ENCODE measurements at regions of chr10 and their contacts with region 1.

Region 1: GRCh38 chr10:63922468-63923314 is 401.5 kb downstream of the REEP3 start:
- DNase-seq: no peak
- ATAC-seq: peak; percentile 31
- H3K4me3 ChIP-seq: no peak overlapping the region
- H3K27ac ChIP-seq: no peak overlapping the region
- H3K4me1 ChIP-seq: no peaks in the 10 kb centered on the region
- H3K27me3 ChIP-seq: peaks cover 30% of the 10 kb centered on the region
- CTCF ChIP-seq: no peak

Region 2: DNA sequence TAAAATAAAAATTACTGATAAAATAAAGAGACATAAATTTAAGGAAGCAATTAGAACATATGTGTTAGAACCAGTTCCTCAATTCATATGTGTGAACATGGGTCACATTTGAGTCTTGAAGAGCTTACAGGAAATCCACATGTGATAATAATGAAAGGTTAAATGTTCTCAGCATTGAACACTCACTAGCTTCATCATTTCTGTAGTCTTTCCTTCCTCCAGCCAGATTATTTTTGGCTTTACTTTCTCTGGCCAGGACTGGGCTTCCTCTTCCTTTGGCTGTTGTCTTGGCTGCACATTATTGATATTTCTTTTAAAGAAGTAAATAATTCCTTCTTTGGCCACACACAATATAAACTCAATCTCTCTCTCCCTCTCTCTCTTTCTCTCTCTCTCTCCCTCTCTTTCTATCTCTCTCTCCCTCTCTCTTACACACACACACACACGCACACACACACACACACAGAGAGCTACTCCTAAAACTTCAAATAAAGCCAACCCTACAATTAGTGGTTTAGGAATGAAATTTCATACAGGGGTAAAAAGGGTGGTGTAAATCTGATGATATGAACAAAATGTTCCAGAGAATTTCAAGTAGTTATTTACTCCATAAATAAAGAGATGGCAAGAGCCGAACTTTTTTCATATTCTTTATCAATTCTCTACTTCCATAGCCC is 230.3 kb before region 1 on chr10:
- CTCF ChIA-PET with region 1: no interaction called
- POLR2A ChIA-PET with region 1: no interaction called
- intact Hi-C with region 1: no loop called
- DNase-seq: no peak
- ATAC-seq: no peak
- H3K4me3 ChIP-seq: no peak overlapping the region
- H3K27ac ChIP-seq: no peak overlapping the region
- H3K4me1 ChIP-seq: peaks cover 4% of the 10 kb centered on the region
- H3K27me3 ChIP-seq: no peaks in the 10 kb centered on the region
- CTCF ChIP-seq: no peak

Region 3: DNA sequence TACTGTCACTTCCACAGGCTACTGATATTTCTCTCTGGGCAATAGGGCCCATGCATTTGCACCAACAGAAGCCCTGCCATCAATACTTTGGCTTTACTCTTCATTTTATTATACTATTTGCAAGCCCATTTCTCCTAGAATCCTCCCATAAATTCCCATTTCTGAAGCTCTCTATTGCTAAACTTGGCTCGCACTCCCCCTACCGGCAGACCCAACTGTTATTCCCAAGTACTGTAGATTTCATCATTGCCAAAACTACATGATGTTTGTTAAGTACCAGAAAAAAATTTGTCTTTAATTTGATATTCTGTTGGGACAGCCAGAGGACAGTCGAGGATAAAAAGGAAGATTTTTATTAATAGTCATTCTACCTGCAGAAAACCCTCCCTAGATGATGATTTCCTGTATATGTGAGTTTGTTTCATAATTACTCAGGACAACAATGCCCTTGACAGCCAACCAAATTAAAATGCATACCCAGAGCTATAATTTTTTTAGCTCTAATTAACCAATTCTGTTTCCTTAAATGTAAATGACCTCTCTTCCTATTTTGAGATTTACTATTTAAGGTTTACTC is 102.8 kb before region 1 on chr10:
- CTCF ChIA-PET with region 1: no interaction called
- POLR2A ChIA-PET with region 1: no interaction called
- intact Hi-C with region 1: no loop called
- DNase-seq: peak; percentile 79
- ATAC-seq: peak; percentile 85
- H3K4me3 ChIP-seq: no peak overlapping the region
- H3K27ac ChIP-seq: no peak overlapping the region
- H3K4me1 ChIP-seq: no peaks in the 10 kb centered on the region
- H3K27me3 ChIP-seq: no peaks in the 10 kb centered on the region
- CTCF ChIP-seq: peak; percentile 96

Region 4: DNA sequence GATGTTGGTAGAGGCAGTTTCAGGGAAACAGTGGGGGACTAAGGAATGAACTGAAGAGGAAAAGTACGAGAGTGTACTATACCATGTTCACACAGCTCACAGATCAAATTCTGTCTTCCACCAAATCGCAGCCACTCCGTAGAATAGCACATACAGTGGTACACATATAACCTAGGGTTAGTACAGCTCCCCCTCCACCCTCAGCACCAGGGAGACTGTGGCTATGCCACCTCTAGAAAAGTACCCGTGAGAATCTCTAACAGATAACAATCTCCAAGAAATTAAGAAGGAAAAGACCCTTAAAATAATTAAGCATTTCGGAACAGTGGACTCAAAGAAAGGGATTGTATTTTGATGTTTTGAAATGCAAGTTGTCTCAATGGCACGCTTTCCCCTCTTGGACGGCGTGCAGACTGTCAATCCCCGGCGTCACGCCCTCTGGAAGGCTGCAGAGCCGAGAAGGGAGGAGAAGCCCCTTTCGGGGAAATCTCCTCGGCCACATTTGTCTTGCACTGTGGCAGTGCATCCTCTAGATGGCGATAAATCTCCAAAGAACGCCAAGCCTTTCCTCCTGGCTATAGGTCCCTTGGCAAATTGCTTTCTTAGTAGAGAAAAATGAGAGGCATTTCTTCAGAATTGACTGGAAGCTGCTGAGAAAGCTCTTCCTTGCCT is 56.5 kb before region 1 on chr10:
- CTCF ChIA-PET with region 1: no interaction called
- POLR2A ChIA-PET with region 1: no interaction called
- intact Hi-C with region 1: loop called (anchors 5 kb)
- DNase-seq: peak; percentile 87
- ATAC-seq: peak; percentile 88
- H3K4me3 ChIP-seq: peak overlapping the region; percentile 57
- H3K27ac ChIP-seq: no peak overlapping the region
- H3K4me1 ChIP-seq: peaks cover 11% of the 10 kb centered on the region
- H3K27me3 ChIP-seq: peaks cover 20% of the 10 kb centered on the region; the same call in 1 of the 2 replicates
- CTCF ChIP-seq: peak; percentile 92

Region 5: GRCh38 chr10:63901228-63901627 is 21.5 kb before region 1 on chr10:
- CTCF ChIA-PET with region 1: no interaction called
- POLR2A ChIA-PET with region 1: no interaction called
- intact Hi-C with region 1: loop called (anchors 2 kb)
- DNase-seq: peak; percentile 24
- ATAC-seq: peak; percentile 38; the same call in 1 of the 2 replicates
- H3K4me3 ChIP-seq: no peak overlapping the region
- H3K27ac ChIP-seq: no peak overlapping the region
- H3K4me1 ChIP-seq: no peaks in the 10 kb centered on the region
- H3K27me3 ChIP-seq: 0 out of 2 replicates have a peak, but pooled peaks cover 4% of the 10 kb centered on the region
- CTCF ChIP-seq: peak; percentile 68

Region 6: DNA sequence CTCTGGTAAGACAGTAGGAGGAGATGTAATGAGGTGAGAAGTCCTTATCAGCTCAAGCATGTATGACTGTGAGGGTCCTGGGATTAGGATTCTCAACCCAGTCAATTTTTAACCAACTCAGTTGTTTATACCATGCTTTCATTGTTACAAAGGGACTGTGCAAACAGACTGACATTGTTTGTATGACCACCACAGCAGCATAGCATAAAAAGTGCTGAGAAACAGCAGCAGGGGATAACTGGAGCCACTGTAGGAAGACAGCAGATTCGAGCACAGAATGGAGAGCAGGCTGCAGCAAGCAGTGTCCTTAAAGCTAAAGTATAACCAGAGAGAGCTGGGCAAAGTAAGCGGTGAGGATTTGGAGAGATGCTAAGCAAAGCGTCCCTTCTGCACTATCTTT is 428.0 kb after region 1 on chr10:
- CTCF ChIA-PET with region 1: no interaction called
- POLR2A ChIA-PET with region 1: no interaction called
- intact Hi-C with region 1: no loop called
- DNase-seq: no peak
- ATAC-seq: no peak
- H3K4me3 ChIP-seq: no peak overlapping the region
- H3K27ac ChIP-seq: no peak overlapping the region
- H3K4me1 ChIP-seq: peaks cover 4% of the 10 kb centered on the region; the same call in 1 of the 2 replicates
- H3K27me3 ChIP-seq: no peaks in the 10 kb centered on the region
- CTCF ChIP-seq: no peak

Measured in PC-3 (cell line).